PC-9 (cell line): ENCODE measurements at regions of chr4 and their contacts with region 1.

Region 1: DNA sequence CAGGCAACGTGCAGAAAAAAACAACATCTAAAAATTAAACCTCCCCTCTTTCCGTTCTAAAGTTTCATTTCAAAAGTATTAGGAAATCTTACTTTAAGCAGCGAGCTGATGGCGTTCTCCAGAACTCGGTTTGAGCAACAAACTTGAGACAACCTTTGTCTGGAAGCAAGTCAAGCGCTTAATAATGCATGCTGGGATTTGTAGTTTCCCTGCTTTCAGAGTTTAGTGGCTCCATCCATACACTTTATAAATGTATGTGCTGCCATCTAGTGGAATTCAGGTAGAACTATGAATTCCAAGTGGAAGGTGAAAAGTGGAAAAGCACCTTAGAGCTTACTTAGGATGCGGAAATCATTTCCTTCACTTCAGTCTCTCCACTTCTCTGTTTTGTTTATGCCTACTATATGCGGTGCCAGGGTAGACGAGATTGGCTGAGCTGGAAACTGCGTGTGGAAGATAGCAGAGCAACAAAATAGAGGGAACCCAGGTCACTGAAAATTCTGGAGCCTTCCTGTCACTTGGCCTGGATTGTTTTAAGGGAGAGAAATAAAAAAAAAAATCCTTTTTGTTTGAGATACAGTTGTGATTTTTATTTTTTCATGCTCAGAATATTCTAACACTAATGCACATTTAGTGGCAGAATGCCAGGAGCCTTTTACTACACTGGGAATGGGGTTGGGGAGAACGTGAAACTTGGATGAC is at the start of gene BDH2:
- DNase-seq: peak; percentile 15 to 84
- H3K4me3 ChIP-seq: peak within 1 kb of the TSS; percentile 52; the same call in 1 of the 2 replicates
- H3K27ac ChIP-seq: no peak within 1 kb of the TSS
- H3K4me1 ChIP-seq: no peaks in the 10 kb centered on the region
- H3K27me3 ChIP-seq: no peaks in the 10 kb centered on the region
- CTCF ChIP-seq: peak; percentile 75
- total RNA-seq, gene BDH2: 9.5 and 10.1 TPM in 2 replicates

Region 2: GRCh38 chr4:102007959-102008425 is 1091.8 kb before region 1 on chr4:
- CTCF ChIA-PET with region 1: interaction called, 22 read pairs
- POLR2A ChIA-PET with region 1: no interaction called
- intact Hi-C with region 1: no loop called
- DNase-seq: no peak
- H3K4me3 ChIP-seq: no peak overlapping the region
- H3K27ac ChIP-seq: no peak overlapping the region
- H3K4me1 ChIP-seq: no peaks in the 10 kb centered on the region
- H3K27me3 ChIP-seq: no peaks in the 10 kb centered on the region
- CTCF ChIP-seq: no peak

Region 3: GRCh38 chr4:102263011-102263787 is 836.6 kb before region 1 on chr4:
- CTCF ChIA-PET with region 1: no interaction called
- POLR2A ChIA-PET with region 1: no interaction called
- intact Hi-C with region 1: loop called (anchors 10 kb)
- DNase-seq: peak; percentile 5 to 70
- H3K4me3 ChIP-seq: no peak overlapping the region
- H3K27ac ChIP-seq: no peak overlapping the region
- H3K4me1 ChIP-seq: no peaks in the 10 kb centered on the region
- H3K27me3 ChIP-seq: no peaks in the 10 kb centered on the region
- CTCF ChIP-seq: peak; percentile 70

Region 4: GRCh38 chr4:102344954-102345794 is 754.7 kb before region 1 on chr4 and contains the start of gene SLC39A8:
- CTCF ChIA-PET with region 1: no interaction called
- POLR2A ChIA-PET with region 1: no interaction called
- intact Hi-C with region 1: loop called (anchors 10 kb)
- DNase-seq: peak; percentile 72 to 82
- H3K4me3 ChIP-seq: peak within 1 kb of the TSS; percentile 72
- H3K27ac ChIP-seq: no peak within 1 kb of the TSS
- H3K4me1 ChIP-seq: peaks cover 15% of the 10 kb centered on the region; the same call in 1 of the 2 replicates
- H3K27me3 ChIP-seq: no peaks in the 10 kb centered on the region
- CTCF ChIP-seq: peak; percentile 72
- total RNA-seq, gene SLC39A8: 11.6 and 14.5 TPM in 2 replicates

Region 5: GRCh38 chr4:103019308-103020124 is 80.3 kb before region 1 on chr4 and contains the start of gene SLC9B1:
- CTCF ChIA-PET with region 1: no interaction called
- POLR2A ChIA-PET with region 1: no interaction called
- intact Hi-C with region 1: loop called (anchors 5 kb)
- DNase-seq: peak; percentile 85 to 92
- H3K4me3 ChIP-seq: peak within 1 kb of the TSS; percentile 73
- H3K27ac ChIP-seq: peak within 1 kb of the TSS; percentile 86
- H3K4me1 ChIP-seq: peaks cover 10% of the 10 kb centered on the region; the same call in 1 of the 2 replicates
- H3K27me3 ChIP-seq: no peaks in the 10 kb centered on the region
- CTCF ChIP-seq: no peak
- total RNA-seq, gene SLC9B1: 0.60 TPM in 1 of 2 replicates, not detected in the other

Region 6: DNA sequence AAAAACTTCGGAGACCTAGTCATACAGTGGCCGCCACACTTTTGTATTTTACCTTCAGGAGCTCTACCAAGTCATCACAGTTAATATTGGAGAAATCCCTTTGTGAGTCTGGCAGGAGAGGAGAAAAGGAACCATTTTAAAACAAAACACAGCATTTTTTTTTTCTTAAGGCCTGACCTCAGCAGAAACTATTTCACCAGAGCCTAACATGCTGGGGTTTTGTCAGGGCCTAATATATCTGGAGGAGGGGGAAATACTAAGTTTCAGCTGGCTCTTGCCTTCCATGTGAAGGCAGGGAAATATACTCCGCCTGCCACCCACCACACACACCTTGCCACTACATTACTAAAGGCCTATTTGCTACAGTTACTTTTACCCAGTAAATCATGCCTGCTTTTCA is 26.3 kb after region 1 on chr4:
- CTCF ChIA-PET with region 1: no interaction called
- POLR2A ChIA-PET with region 1: no interaction called
- intact Hi-C with region 1: no loop called
- DNase-seq: no peak
- H3K4me3 ChIP-seq: no peak overlapping the region
- H3K27ac ChIP-seq: no peak overlapping the region
- H3K4me1 ChIP-seq: no peaks in the 10 kb centered on the region
- H3K27me3 ChIP-seq: no peaks in the 10 kb centered on the region
- CTCF ChIP-seq: no peak

Region 7: DNA sequence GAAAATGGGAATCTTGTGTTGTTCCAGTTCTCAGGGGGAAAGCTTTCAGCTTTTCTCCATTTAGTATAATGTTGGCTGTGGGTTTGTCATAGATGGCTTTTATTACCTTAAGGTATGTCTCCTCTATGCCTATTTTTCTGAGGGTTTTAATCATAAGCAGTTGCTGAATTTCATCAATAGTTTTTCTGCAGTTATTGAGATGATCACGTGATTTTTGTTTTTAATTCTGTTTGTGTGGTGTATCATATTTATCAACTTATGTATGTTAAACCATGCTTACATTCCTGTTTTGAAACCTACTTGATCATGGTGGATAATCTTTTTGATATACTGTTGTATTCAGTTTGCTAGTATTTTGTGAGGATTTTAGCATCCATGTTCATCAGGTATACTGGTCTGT is 165.1 kb after region 1 on chr4:
- CTCF ChIA-PET with region 1: no interaction called
- POLR2A ChIA-PET with region 1: no interaction called
- intact Hi-C with region 1: no loop called
- DNase-seq: no peak
- H3K4me3 ChIP-seq: no peak overlapping the region
- H3K27ac ChIP-seq: no peak overlapping the region
- H3K4me1 ChIP-seq: no peaks in the 10 kb centered on the region
- H3K27me3 ChIP-seq: no peaks in the 10 kb centered on the region
- CTCF ChIP-seq: no peak